Caco-2 (cell line): ENCODE measurements at regions of chr7 and their contacts with region 1.

Region 1: DNA sequence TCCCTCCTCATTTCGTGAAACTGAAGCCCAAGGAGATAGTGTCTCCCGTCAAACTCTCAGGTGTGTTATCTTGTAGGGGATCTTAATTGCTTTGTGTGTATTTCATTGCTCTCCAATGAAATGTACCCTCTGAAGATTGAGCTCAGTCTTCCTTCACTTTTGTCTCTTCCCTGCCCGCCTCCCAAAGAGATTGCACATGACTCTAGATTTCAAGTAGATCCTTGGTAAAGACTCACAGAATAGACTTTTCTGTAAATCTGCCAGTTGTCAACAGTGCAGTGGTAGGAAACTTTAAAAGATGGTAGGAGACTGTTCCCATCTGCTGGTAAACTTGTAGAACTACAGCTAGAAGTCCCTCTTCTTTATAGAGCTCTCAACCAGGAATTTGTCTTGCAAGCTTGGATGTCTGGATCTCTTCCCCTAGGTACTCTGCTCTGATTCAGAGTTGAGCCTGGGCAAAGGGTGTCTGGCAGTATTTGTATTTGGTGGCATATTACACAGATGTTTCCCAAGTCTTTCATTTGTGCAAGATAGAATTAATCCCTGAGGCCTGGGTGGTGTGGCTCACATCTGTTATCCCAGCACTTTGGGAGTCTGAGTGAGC is 9.6 kb downstream of the CCL26 start:
- DNase-seq: peak in 1 of 2 experiments; percentile 42
- H3K4me3 ChIP-seq: no peak overlapping the region
- H3K4me3 Mint-ChIP-seq: no peak overlapping the region
- H3K27ac Mint-ChIP-seq: no peak overlapping the region
- H3K4me1 ChIP-seq: no peaks in the 10 kb centered on the region
- H3K4me1 Mint-ChIP-seq: peaks cover 6% of the 10 kb centered on the region
- H3K27me3 ChIP-seq: no peaks in the 10 kb centered on the region
- H3K27me3 Mint-ChIP-seq: no peaks in the 10 kb centered on the region
- CTCF ChIP-seq: peak; percentile 48 to 73

Region 2: DNA sequence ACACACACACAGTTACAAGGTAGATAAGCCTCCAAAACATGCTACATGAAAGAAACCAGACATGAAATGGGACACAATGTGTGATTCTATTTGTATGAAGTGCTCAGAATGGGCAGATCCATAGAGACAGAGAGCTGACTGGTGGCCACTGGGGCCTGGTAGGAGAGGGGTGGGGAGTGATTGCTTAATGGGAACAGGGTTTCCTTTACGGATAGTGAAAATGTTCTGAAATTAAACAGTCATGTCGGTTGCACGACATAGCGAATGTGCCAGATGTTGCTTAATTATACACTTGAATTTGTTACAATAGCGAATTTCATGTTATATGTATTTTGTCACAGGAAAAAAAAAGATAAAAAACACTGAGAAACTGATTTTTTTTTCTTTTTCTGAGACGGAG is 148.0 kb before region 1 on chr7:
- CTCF ChIA-PET with region 1: no interaction called
- POLR2A ChIA-PET with region 1: no interaction called
- intact Hi-C with region 1: loop called (anchors 1 kb)
- DNase-seq: no peak
- H3K4me3 ChIP-seq: no peak overlapping the region
- H3K4me3 Mint-ChIP-seq: no peak overlapping the region
- H3K27ac Mint-ChIP-seq: no peak overlapping the region
- H3K4me1 ChIP-seq: no peaks in the 10 kb centered on the region
- H3K4me1 Mint-ChIP-seq: no peaks in the 10 kb centered on the region
- H3K27me3 ChIP-seq: no peaks in the 10 kb centered on the region
- H3K27me3 Mint-ChIP-seq: no peaks in the 10 kb centered on the region
- CTCF ChIP-seq: no peak